AG04450 (cell line): ENCODE measurements at regions of chr14 and their contacts with region 1.

Region 1: DNA sequence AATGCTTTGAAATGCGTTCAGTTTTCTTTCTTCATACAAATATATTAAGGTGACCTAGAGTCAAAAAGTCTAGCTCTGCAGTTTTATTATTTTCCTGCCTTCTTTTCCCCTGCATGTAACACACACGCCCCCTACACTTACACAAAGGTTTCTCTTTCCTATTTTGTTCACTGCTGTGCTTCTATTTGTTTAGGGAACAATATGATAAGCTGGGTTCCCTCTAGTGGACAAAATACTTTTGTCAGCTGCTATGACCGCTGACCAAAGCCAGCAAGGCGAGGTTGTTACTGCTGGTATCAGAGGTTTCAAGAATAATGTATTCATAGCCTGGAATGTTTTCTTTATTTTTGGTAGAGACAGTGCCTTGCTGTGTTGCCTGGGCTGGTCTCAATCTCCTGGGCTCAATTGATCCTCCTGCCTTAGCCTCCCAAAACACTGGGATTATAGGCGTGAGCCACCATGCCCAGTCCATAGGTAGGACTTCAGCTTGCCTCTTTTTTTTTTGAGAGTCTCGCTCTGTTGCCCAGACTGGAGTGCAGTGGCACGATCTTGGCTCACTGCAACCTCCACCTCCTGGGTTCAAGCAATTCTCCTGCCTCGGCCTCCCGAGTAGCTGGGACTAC is 33.4 kb downstream of the FNTB start:
- DNase-seq: peak; percentile 54
- H3K4me3 ChIP-seq: no peak overlapping the region
- H3K27ac ChIP-seq: no peak overlapping the region
- H3K27me3 ChIP-seq: no peaks in the 10 kb centered on the region
- CTCF ChIP-seq: peak; percentile 84

Region 2: DNA sequence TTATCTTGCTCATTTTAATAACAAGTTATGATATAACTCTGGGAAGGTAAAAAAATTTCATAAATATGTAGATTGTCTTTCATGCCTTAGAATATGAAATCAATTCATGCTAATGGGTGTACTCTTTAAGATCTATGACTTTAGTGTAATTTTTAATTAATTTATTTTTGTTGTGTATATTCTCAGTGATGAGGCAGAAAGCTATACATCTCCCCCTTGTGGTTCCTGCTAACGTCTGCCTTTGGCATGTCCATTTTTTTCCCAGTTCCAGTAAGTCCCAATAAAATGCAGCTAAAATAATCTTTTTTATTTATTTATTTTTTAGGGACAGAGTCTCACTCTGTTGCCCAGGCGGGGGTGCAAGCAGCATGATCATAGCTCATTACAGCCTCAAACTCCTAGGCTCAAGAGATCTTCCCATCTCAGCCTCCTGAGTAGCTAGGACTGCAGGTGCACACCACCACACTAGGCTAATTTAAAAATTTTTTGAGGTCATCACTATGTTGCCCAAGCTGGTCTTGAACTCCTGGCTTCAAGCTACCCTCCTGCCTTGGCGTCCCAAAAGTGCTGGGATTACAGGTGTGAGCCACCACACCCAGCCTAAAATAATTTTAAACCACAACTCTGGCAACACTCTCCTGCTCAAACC is 109.1 kb before region 1 on chr14:
- CTCF ChIA-PET with region 1: interaction called, 10 read pairs
- POLR2A ChIA-PET with region 1: no interaction called
- DNase-seq: peak; percentile 13
- H3K4me3 ChIP-seq: no peak overlapping the region
- H3K27ac ChIP-seq: no peak overlapping the region
- H3K27me3 ChIP-seq: peaks cover 11% of the 10 kb centered on the region
- CTCF ChIP-seq: peak; percentile 84

Region 3: DNA sequence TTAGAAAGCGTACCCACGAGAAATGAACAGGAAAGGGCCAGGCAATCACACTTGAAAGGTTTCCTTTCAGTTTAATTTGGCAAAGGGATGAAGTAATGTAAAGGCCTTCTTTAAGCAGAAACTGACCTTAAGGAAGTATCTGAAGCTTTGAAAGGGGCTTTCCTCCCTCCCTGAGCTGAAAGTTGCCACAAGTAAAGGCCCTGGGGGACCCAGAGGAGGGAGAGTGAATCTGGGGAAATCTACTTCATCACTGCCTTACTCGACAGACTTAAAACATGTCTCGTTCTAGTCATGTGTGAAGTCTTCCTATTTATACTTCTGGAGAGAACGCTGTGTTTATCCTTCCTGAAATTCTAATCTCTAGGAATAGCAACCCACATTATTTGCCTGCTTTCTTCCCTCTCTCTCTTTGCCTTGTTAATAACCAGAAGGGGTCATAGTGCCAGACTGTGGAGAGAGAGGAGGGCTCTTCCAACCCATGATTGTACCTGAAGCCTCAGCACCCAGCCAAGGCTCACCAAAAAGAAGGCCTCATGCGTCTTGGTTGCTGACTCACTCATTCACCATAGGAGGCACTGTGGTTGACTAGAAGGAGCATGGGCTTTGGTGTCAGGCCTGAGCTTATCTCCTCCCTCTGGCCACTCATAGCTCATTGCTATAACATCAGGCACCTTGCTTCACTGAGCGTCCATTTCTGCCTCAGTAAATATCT is 67.3 kb before region 1 on chr14:
- CTCF ChIA-PET with region 1: interaction called, 10 read pairs
- POLR2A ChIA-PET with region 1: no interaction called
- DNase-seq: no peak
- H3K4me3 ChIP-seq: no peak overlapping the region
- H3K27ac ChIP-seq: no peak overlapping the region
- H3K27me3 ChIP-seq: no peaks in the 10 kb centered on the region
- CTCF ChIP-seq: 0 out of 2 replicates have a peak, but pooled peaks have one; percentile 6

Region 4: DNA sequence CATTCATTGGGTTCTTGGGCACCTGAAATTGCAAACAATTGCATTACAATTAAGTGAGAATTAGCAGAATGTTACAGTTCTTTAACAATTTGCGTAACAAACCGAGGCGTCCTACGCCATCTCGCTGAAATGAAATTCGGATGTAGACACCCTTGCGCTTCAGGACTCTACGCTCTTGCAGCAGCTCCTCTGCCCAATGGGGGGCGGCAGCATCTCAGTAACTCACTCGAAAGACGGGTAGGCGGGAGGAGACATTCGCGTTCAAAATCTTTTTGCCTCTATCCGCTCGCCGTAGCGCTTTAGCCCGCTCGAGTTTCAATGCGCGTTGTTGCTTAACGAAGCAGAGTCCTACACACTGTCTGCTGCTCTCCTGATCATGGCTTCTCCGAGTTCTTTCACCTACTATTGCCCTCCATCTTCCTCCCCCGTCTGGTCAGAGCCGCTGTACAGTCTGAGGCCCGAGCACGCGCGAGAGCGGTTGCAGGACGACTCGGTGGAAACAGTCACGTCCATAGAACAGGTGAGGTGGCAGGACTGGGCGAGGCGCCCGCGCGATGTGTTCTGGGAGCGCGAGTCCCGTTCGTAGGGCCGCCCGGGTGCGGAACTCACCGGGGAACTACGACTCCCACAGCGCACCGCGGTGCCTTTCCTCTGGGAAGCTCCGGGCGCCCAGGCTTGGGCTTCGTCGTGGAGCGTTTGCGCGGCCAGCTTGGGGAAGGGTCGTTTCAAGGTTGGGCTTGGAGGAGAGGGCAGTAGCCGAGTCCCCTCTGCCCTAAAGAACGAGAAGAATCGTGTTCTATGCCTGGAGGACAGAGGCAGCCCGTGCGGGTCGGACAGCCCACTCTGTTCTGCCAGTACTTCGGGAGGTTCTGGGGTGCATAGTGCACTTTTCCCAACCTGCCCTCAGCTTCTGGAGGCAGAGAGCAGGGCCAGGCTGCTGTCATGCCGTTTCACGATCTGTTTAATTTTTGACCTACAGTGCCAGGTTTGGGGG is 33.2 kb before region 1 on chr14 and contains the start of gene FNTB:
- CTCF ChIA-PET with region 1: interaction called, 100 read pairs
- POLR2A ChIA-PET with region 1: interaction called, 14 read pairs
- DNase-seq: peak; percentile 92
- H3K4me3 ChIP-seq: peak within 1 kb of the TSS; percentile 99
- H3K27ac ChIP-seq: peak within 1 kb of the TSS; percentile 80
- H3K27me3 ChIP-seq: peaks cover 9% of the 10 kb centered on the region
- CTCF ChIP-seq: peak; percentile 83
- polyA plus RNA-seq, gene FNTB: 17.3 and 20.2 TPM in 2 replicates

Region 5: GRCh38 chr14:64997108-64997794 is 22.8 kb before region 1 on chr14:
- CTCF ChIA-PET with region 1: interaction called, 91 read pairs
- POLR2A ChIA-PET with region 1: no interaction called
- DNase-seq: no peak
- H3K4me3 ChIP-seq: no peak overlapping the region
- H3K27ac ChIP-seq: no peak overlapping the region
- H3K27me3 ChIP-seq: no peaks in the 10 kb centered on the region
- CTCF ChIP-seq: no peak

Region 6: GRCh38 chr14:65032319-65032718 is 12.3 kb after region 1 on chr14:
- CTCF ChIA-PET with region 1: interaction called, 18 read pairs
- POLR2A ChIA-PET with region 1: interaction called, 4 read pairs
- DNase-seq: no peak
- H3K4me3 ChIP-seq: no peak overlapping the region
- H3K27ac ChIP-seq: no peak overlapping the region
- H3K27me3 ChIP-seq: no peaks in the 10 kb centered on the region
- CTCF ChIP-seq: no peak

Region 7: GRCh38 chr14:65042731-65043372 is 22.8 kb after region 1 on chr14:
- CTCF ChIA-PET with region 1: interaction called, 14 read pairs
- POLR2A ChIA-PET with region 1: no interaction called
- DNase-seq: no peak
- H3K4me3 ChIP-seq: no peak overlapping the region
- H3K27ac ChIP-seq: no peak overlapping the region
- H3K27me3 ChIP-seq: no peaks in the 10 kb centered on the region
- CTCF ChIP-seq: no peak

Region 8: DNA sequence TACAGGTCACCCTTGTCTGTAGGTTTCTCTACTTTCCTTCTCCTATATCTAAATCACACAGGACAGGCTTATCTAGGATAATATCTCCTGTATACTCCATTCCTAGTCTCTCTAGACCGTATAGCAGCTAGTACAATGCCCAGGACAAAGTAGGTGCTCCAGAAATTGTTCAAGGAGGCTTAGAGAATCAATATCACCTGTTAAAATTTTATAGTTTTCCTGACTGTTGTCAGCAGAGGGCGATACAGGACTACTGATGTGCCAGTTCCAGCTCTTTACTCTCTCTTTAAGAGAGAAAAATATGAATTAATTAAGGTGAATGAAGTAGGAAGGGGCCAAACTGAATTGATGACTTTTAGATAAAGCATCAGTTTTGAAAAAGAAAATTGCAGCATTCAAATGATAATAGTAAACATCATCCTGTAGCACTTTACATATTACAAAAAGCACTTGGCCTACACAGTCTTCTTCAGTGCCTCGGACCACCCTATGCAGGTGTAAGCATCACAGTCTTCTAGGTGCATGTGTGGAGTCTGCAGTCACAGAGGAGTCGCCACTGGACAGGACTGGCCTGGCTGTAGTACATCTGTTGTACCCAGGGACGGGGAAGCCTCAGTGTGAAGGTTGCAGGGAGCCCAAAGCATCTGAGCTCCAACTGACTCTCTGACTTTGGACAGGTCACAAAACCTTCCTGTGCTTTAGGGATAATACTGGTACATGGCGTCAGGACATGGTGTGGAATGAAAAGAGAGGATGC is 144.2 kb after region 1 on chr14:
- CTCF ChIA-PET with region 1: no interaction called
- POLR2A ChIA-PET with region 1: no interaction called
- DNase-seq: no peak
- H3K4me3 ChIP-seq: no peak overlapping the region
- H3K27ac ChIP-seq: no peak overlapping the region
- H3K27me3 ChIP-seq: no peaks in the 10 kb centered on the region
- CTCF ChIP-seq: peak; percentile 71

Region 9: GRCh38 chr14:65206448-65207096 is 186.5 kb after region 1 on chr14:
- CTCF ChIA-PET with region 1: no interaction called
- POLR2A ChIA-PET with region 1: no interaction called
- DNase-seq: peak; percentile 58
- H3K4me3 ChIP-seq: no peak overlapping the region
- H3K27ac ChIP-seq: no peak overlapping the region
- H3K27me3 ChIP-seq: no peaks in the 10 kb centered on the region
- CTCF ChIP-seq: no peak